ENCODE measurements at regions of chr1 and their contacts with region 1.

Region 1: GRCh38 chr1:245156081-245156735 is 1.4 kb downstream of the KIF26B start:
- DNase-seq: peak; percentile 50
- ATAC-seq: peak; percentile 89
- H3K4me3 ChIP-seq: peak overlapping the region; percentile 54 to 73 (median 57)
- H3K27ac ChIP-seq: no peak overlapping the region
- H3K4me1 ChIP-seq: peaks cover 40% of the 10 kb centered on the region
- H3K27me3 ChIP-seq: peaks cover 14 to 60% of the 10 kb centered on the region in 2 experiments
- CTCF ChIP-seq: peak; percentile 83
- EP300 ChIP-seq: no peak
- POLR2A ChIP-seq: no peak
- RAD21 ChIP-seq: peak; percentile 91

Region 2: GRCh38 chr1:245079021-245079609 is 77.1 kb before region 1 on chr1:
- CTCF ChIA-PET with region 1: no interaction called
- POLR2A ChIA-PET with region 1: no interaction called
- in situ Hi-C with region 1: no loop called
- intact Hi-C with region 1: loop called (anchors 1 kb)
- DNase-seq: peak; percentile 29
- ATAC-seq: no peak
- H3K4me3 ChIP-seq: no peak overlapping the region
- H3K27ac ChIP-seq: no peak overlapping the region
- H3K4me1 ChIP-seq: no peaks in the 10 kb centered on the region
- H3K27me3 ChIP-seq: no peaks in the 10 kb centered on the region
- CTCF ChIP-seq: peak; percentile 72
- EP300 ChIP-seq: no peak
- POLR2A ChIP-seq: no peak
- RAD21 ChIP-seq: peak; percentile 63

Region 3: GRCh38 chr1:245091818-245092637 is 64.2 kb before region 1 on chr1:
- CTCF ChIA-PET with region 1: no interaction called
- POLR2A ChIA-PET with region 1: no interaction called
- in situ Hi-C with region 1: no loop called
- intact Hi-C with region 1: no loop called
- DNase-seq: peak; percentile 84
- ATAC-seq: peak; percentile 92
- H3K4me3 ChIP-seq: no peak overlapping the region
- H3K27ac ChIP-seq: peak overlapping the region; percentile 69
- H3K4me1 ChIP-seq: peaks cover 61% of the 10 kb centered on the region
- H3K27me3 ChIP-seq: no peaks in the 10 kb centered on the region
- CTCF ChIP-seq: no peak
- EP300 ChIP-seq: peak in 1 of 2 experiments; percentile 55; a peak in 3 of 4 replicates
- POLR2A ChIP-seq: 0 out of 4 replicates have a peak, but pooled peaks have one; percentile 22 to 29
- RAD21 ChIP-seq: no peak

Region 4: GRCh38 chr1:245216366-245217115 is 60.3 kb after region 1 on chr1:
- CTCF ChIA-PET with region 1: no interaction called
- POLR2A ChIA-PET with region 1: no interaction called
- in situ Hi-C with region 1: no loop called
- intact Hi-C with region 1: no loop called
- DNase-seq: no peak
- ATAC-seq: no peak
- H3K4me3 ChIP-seq: no peak overlapping the region
- H3K27ac ChIP-seq: no peak overlapping the region
- H3K4me1 ChIP-seq: no peaks in the 10 kb centered on the region
- H3K27me3 ChIP-seq: no peaks in the 10 kb centered on the region
- CTCF ChIP-seq: no peak
- EP300 ChIP-seq: no peak
- POLR2A ChIP-seq: no peak
- RAD21 ChIP-seq: no peak

Region 5: DNA sequence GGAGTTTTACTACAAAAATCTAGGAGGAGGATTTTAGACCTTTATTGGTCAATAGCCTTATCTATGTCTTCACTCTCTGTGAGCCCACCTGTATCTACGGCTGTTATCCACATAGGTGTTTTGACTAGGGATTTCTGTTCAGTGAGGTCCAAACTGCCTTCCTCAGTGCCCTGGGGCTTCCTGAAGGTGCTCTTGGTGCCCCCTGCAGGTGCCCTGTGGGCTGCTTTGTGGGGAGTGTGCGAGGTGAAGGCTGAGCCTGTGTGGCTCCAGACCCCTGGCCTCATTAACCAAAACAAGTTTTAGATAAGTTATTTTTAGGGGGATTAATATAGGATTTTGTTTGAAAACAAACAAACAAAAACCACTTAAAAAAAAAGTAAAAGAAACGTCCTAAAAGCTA is 121.1 kb after region 1 on chr1:
- CTCF ChIA-PET with region 1: interaction called, 10 read pairs
- POLR2A ChIA-PET with region 1: no interaction called
- in situ Hi-C with region 1: loop called (anchors 5 kb)
- intact Hi-C with region 1: loop called (anchors 1 kb)
- DNase-seq: peak; percentile 27
- ATAC-seq: peak; percentile 98
- H3K4me3 ChIP-seq: no peak overlapping the region
- H3K27ac ChIP-seq: no peak overlapping the region
- H3K4me1 ChIP-seq: peaks cover 10% of the 10 kb centered on the region; the same call in 1 of the 2 replicates
- H3K27me3 ChIP-seq: no peaks in the 10 kb centered on the region
- CTCF ChIP-seq: peak; percentile 77
- EP300 ChIP-seq: no peak
- POLR2A ChIP-seq: no peak
- RAD21 ChIP-seq: peak; percentile 43

Region 6: GRCh38 chr1:245396615-245397014 is 240.4 kb after region 1 on chr1:
- CTCF ChIA-PET with region 1: no interaction called
- POLR2A ChIA-PET with region 1: no interaction called
- in situ Hi-C with region 1: no loop called
- intact Hi-C with region 1: loop called (anchors 5 kb)
- DNase-seq: no peak
- ATAC-seq: no peak
- H3K4me3 ChIP-seq: no peak overlapping the region
- H3K27ac ChIP-seq: no peak overlapping the region
- H3K4me1 ChIP-seq: peaks cover 33% of the 10 kb centered on the region
- H3K27me3 ChIP-seq: no peaks in the 10 kb centered on the region
- CTCF ChIP-seq: no peak
- EP300 ChIP-seq: no peak
- POLR2A ChIP-seq: no peak
- RAD21 ChIP-seq: no peak

Region 7: GRCh38 chr1:245641384-245641783 is 485.2 kb after region 1 on chr1:
- CTCF ChIA-PET with region 1: no interaction called
- POLR2A ChIA-PET with region 1: no interaction called
- in situ Hi-C with region 1: no loop called
- intact Hi-C with region 1: no loop called
- DNase-seq: no peak
- ATAC-seq: no peak
- H3K4me3 ChIP-seq: no peak overlapping the region
- H3K27ac ChIP-seq: no peak overlapping the region
- H3K4me1 ChIP-seq: no peaks in the 10 kb centered on the region
- H3K27me3 ChIP-seq: no peaks in the 10 kb centered on the region
- CTCF ChIP-seq: no peak
- EP300 ChIP-seq: no peak
- POLR2A ChIP-seq: no peak
- RAD21 ChIP-seq: no peak

Region 8: GRCh38 chr1:246117066-246117791 is 961.0 kb after region 1 on chr1:
- CTCF ChIA-PET with region 1: no interaction called
- POLR2A ChIA-PET with region 1: no interaction called
- in situ Hi-C with region 1: no loop called
- intact Hi-C with region 1: loop called (anchors 10 kb)
- DNase-seq: peak; percentile 8
- ATAC-seq: peak; percentile 86
- H3K4me3 ChIP-seq: no peak overlapping the region
- H3K27ac ChIP-seq: no peak overlapping the region
- H3K4me1 ChIP-seq: peaks cover 3% of the 10 kb centered on the region
- H3K27me3 ChIP-seq: no peaks in the 10 kb centered on the region
- CTCF ChIP-seq: peak; percentile 60
- EP300 ChIP-seq: no peak
- POLR2A ChIP-seq: no peak
- RAD21 ChIP-seq: no peak